ENCODE measurements at regions of chr19 and their contacts with region 1.

Region 1: GRCh38 chr19:17305517-17306284 is at the start of gene MRPL34:
- DNase-seq: peak; percentile 94 to 98
- ATAC-seq: peak; percentile 69 to 72
- H3K4me3 ChIP-seq: peak within 1 kb of the TSS; percentile 64 to 83 (median 72)
- H3K27ac ChIP-seq: peak within 1 kb of the TSS; percentile 92 to 94 (median 94)
- H3K4me1 ChIP-seq: peaks cover 44 to 52% of the 10 kb centered on the region in 2 donors
- H3K27me3 ChIP-seq: no peaks in the 10 kb centered on the region
- CTCF ChIP-seq: peak; percentile 74 to 86 (median 82)
- POLR2A ChIP-seq: peak; percentile 69 to 75
- total RNA-seq, gene MRPL34: 145 to 369 (median 249) TPM

Region 2: GRCh38 chr19:17075035-17075863 is 230.5 kb before region 1 on chr19 and contains the starts of genes HAUS8 and MYO9B:
- in situ Hi-C with region 1: no loop called
- intact Hi-C with region 1: loop called (anchors 1 kb)
- DNase-seq: peak; percentile 98 to 99
- ATAC-seq: peak; percentile 94
- H3K4me3 ChIP-seq: peak within 1 kb of the TSS; percentile 73 to 85 (median 80)
- H3K27ac ChIP-seq: peak within 1 kb of the TSS; percentile 79 to 84 (median 80)
- H3K4me1 ChIP-seq: peaks cover 18 to 33% of the 10 kb centered on the region in 2 donors
- H3K27me3 ChIP-seq: no peaks in the 10 kb centered on the region
- CTCF ChIP-seq: peak in 1 of 5 experiments; percentile 11
- POLR2A ChIP-seq: peak; percentile 62 to 85
- total RNA-seq, gene HAUS8: 0.97 to 4.5 (median 3.3) TPM
- total RNA-seq, gene MYO9B: 20.0 to 22.1 (median 20.7) TPM

Region 3: DNA sequence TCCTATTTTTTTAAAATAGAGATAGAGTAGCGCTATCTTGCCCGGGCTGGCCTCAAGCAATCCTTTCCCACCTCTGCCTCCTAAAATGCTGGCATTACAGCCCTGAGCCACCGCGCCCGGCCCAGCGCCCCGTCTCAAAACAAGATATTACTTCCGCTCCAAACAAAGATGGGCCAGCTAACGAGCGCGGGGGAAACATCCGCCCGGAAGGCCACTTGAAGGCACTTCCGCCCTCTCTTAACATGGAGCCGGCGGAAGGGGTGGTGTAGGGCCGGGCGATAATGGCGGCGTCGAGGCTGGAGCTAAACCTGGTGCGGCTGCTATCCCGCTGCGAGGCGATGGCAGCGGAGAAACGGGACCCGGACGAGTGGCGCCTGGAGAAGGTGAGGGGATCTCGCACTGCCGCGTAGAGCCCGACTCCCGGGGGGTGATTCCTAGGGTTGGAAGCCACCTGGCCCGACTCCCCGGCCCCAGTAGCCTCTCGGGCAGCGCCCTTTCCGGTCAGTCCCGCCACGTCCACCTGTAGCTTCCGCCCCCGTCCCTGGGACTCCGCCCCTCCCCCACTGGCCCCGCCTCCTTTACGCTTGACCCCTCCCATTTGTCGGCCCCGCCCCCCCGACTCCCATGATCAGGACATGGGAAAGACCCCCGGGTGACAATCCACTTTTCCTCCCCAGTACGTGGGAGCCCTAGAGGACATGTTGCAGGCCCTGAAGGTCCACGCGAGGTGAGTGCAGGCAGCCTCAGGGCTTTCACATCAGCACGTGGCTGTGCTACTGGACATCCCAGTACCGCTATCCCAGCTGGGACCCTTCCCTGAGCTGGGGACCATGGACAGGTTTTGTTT is 90.4 kb before region 1 on chr19 and contains the start of gene USE1:
- in situ Hi-C with region 1: no loop called
- intact Hi-C with region 1: loop called (anchors 1 kb)
- DNase-seq: peak; percentile 86 to 89
- ATAC-seq: peak; percentile 98 to 99
- H3K4me3 ChIP-seq: peak within 1 kb of the TSS; percentile 81 to 88 (median 84)
- H3K27ac ChIP-seq: peak within 1 kb of the TSS; percentile 85 to 91 (median 89)
- H3K4me1 ChIP-seq: peaks cover 9 to 14% of the 10 kb centered on the region in 2 donors
- H3K27me3 ChIP-seq: no peaks in the 10 kb centered on the region
- CTCF ChIP-seq: no peak
- POLR2A ChIP-seq: peak in 1 of 2 donors; percentile 31
- total RNA-seq, gene USE1: 14.1 to 39.9 (median 22.3) TPM

Region 4: DNA sequence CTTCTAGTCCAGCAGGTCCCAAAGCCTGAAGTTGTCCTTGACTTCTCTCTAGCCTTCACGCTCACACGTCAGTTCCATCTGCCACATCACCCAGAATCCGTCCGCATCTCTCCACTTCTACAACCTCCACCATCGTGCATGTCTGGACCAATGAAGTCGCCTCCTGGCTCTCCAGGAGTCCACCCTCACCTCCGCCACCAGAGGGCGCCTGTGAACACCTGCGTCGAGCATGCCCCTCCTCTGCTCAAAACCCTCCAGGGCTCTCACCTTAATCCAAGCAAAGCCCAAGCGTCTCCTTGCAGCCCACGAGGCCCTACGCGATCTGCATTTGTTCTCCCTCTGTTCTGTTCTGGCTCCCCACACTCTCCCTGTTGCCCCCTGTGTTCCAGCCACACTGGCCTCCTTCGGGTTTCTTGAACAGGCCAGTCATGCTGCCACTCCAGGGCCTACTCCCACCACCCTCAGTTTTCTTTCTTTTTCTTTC is 44.8 kb before region 1 on chr19:
- in situ Hi-C with region 1: no loop called
- intact Hi-C with region 1: loop called (anchors 1 kb)
- DNase-seq: peak; percentile 57 to 77
- ATAC-seq: peak; percentile 92 to 98
- H3K4me3 ChIP-seq: no peak overlapping the region
- H3K27ac ChIP-seq: no peak overlapping the region
- H3K4me1 ChIP-seq: no peaks in the 10 kb centered on the region
- H3K27me3 ChIP-seq: no peaks in the 10 kb centered on the region
- CTCF ChIP-seq: peak; percentile 76 to 94 (median 88)
- POLR2A ChIP-seq: no peak

Region 5: DNA sequence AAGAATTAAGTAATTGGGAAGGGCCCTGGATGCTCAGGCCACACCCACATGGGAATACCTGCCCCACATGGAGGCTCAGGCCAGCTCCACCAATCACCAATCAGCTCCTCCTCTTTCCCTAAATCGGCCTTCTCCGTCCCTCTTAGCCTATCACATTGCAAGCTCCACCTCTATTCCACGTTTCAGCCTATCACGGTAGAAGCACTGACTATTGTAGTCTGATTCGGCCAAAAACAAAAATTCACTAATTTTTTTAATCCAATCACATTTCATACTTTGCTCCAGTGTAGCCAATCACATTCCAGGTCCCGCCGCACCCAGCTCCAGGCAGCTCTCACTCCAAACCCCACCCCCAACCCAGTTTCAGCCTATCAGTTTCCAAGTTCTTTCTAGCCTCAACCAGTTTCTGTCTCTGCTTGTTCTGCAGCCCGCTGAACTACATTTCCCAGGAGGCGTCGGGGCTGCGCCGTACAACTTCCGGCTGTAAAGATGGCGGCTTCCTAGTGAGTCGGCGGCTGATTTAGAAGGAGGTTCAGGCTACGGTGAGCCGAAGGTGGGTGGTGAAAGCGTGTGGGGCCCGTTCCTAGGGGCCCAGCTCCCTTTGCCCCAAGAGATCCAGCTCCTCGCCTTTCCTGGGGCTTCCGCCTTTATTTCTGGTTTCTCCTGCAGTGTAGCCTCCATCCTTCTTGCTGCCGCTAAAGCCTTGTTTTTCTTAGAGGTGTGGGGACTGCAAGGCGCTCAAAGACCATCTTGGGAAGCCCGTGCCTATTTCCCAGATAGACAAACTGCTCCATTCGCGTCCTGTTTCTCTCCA is 38.5 kb before region 1 on chr19 and contains the start of gene BABAM1:
- in situ Hi-C with region 1: no loop called
- intact Hi-C with region 1: loop called (anchors 1 kb)
- DNase-seq: peak; percentile 97
- ATAC-seq: peak; percentile 98 to 99
- H3K4me3 ChIP-seq: peak within 1 kb of the TSS; percentile 83 to 92 (median 89)
- H3K27ac ChIP-seq: peak within 1 kb of the TSS; percentile 77 to 91 (median 86)
- H3K4me1 ChIP-seq: peaks cover 8 to 10% of the 10 kb centered on the region in 2 donors
- H3K27me3 ChIP-seq: no peaks in the 10 kb centered on the region
- CTCF ChIP-seq: no peak
- POLR2A ChIP-seq: peak; percentile 17 to 61
- total RNA-seq, gene BABAM1: 86.3 to 120 (median 99.4) TPM

Region 6: DNA sequence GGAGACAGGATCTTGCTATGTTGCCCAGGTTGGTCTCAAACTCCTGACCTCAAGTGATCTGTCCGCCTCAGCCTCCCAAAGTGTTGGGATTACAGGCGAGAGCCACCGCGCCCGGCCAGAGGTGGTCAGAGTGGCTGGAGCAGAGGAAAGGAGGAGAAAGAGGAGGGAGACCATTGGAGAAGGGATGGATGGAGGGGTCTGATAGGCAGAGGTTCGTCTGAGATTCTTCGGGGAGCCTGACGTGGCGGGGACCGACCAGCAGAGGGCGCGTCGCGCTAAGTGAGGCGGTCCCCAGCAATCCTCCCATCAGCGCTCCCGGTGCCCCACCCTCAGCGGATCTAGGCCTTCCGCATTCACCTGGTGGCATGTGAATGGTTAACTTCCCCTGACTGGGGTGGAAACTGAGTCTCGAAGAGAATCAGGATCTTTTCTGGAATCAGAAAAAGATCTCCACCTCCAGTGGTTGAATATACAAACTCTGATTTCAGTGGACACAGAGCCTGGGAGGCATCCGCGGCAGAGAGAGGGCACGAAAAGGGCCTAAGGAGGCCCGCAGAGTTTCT is 40.5 kb after region 1 on chr19:
- in situ Hi-C with region 1: no loop called
- intact Hi-C with region 1: no loop called
- DNase-seq: peak in 1 of 2 donors; percentile 59
- ATAC-seq: peak; percentile 78 to 81
- H3K4me3 ChIP-seq: no peak overlapping the region
- H3K27ac ChIP-seq: peak overlapping the region; percentile 54 to 75 (median 69)
- H3K4me1 ChIP-seq: peaks cover 30 to 33% of the 10 kb centered on the region in 2 donors
- H3K27me3 ChIP-seq: no peaks in the 10 kb centered on the region
- CTCF ChIP-seq: peak; percentile 93 to 98 (median 97)
- POLR2A ChIP-seq: no peak

Region 7: DNA sequence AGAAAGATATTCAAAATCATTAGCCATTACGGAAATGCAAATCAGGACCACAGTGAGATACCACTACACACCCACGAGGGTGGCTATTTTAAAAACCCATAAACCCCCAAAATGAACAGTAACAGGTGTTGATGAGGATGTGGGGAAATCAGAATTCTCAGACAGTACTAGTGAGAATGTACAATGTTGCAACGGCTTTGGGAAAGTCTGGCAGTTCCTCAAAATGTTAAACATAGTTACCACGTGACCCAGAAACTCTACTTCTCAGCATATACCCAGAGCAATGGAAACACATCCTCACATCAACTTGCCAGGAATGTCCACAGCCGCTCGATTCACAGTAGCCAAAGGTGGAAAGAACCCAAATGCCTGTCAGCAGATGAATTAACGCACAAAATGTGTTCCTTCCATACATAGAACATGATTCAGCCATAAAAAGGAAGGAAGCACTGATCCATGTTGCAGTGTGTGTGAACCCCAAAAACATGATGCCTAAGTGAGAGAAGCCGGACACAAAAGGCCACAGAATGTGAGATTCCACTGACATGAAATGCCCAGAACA is 64.4 kb after region 1 on chr19:
- in situ Hi-C with region 1: no loop called
- intact Hi-C with region 1: no loop called
- DNase-seq: peak; percentile 76 to 83
- ATAC-seq: peak; percentile 96
- H3K4me3 ChIP-seq: peak overlapping the region in 3 of 4 donors; percentile 17 to 29 (median 24)
- H3K27ac ChIP-seq: peak overlapping the region; percentile 81 to 93 (median 92)
- H3K4me1 ChIP-seq: peaks cover 15 to 18% of the 10 kb centered on the region in 2 donors
- H3K27me3 ChIP-seq: no peaks in the 10 kb centered on the region
- CTCF ChIP-seq: no peak
- POLR2A ChIP-seq: no peak

Region 8: DNA sequence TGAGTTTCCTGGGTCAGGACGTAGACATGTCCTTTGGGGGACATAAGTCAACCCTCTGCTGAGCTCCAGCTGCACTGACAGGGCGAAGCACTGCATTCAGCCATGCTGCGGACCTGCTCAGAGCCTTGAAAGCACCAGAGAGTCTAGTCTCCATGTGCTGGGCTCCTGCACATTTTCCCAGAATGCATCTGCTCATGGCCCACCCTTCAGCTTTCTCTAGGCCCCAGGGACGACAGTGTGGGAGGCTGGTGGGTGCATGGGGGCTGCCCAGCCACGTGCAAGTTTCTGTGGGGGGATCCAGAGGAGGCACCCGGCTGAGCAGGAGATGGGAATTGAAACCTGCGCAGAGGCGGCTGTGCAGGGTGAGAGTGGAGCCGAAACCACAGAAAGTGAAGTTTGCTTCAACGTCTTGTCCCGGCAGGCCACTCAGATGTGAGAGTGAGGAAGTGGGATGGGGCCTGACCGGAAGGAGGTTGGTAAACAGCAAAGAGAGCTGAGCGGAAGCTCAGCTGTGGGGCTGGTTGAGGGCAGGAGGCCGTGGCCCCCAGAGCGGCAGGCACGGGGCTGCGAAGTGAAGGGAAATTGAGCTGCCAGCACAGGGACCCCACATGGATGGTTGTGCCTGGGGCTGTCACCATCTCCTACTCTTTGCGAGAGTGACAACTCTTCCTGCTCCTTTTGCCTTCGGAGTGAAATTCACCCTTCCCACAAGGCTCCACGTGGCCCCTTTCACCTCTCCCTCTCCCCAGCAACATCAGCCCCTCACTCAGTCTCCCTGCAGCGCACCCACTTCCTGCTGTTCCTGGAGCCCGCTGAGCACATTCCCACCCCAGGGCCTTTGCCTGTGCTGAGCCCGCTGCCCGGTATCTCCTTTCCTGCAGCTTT is 217.5 kb after region 1 on chr19:
- in situ Hi-C with region 1: no loop called
- intact Hi-C with region 1: no loop called
- DNase-seq: peak; percentile 31 to 48
- ATAC-seq: peak in 1 of 2 donors; percentile 51
- H3K4me3 ChIP-seq: no peak overlapping the region
- H3K27ac ChIP-seq: peak overlapping the region in 1 of 4 donors; percentile 41
- H3K4me1 ChIP-seq: no peaks in the 10 kb centered on the region
- H3K27me3 ChIP-seq: peaks cover 0 to 11% (median 7%) of the 10 kb centered on the region in 3 donors
- CTCF ChIP-seq: no peak
- POLR2A ChIP-seq: no peak

Measured in gastrocnemius medialis (tissue), 4 donors.